IMR-90 (cell line): ENCODE measurements at regions of chr6 and their contacts with region 1.

Region 1: DNA sequence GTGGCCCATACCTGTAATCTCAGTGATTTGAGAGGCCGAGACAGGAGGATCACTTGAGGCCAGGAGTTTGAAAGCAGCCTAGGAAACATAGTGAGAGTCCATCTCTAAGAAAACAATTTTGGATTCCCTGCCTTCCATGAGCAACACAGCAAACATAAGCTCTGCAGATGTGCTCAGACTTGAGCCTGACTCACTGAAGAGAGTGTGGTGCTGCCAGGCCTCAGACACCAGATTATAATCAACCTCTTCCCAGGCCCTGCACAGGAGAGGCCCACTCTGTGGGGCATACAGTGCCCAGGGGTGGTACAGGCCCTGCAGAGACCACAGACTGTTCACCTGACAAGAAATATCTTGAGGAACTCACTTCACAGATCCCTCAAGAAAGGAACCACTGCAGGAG is 19.9 kb downstream of the HLA-DPB1 start:
- DNase-seq: peak; percentile 5
- ATAC-seq: no peak
- H3K4me3 ChIP-seq: no peak overlapping the region
- H3K27ac ChIP-seq: no peak overlapping the region
- H3K4me1 ChIP-seq: no peaks in the 10 kb centered on the region
- H3K27me3 ChIP-seq: peaks cover 16% of the 10 kb centered on the region
- CTCF ChIP-seq: no peak
- POLR2A ChIP-seq: no peak
- RAD21 ChIP-seq: no peak

Region 2: DNA sequence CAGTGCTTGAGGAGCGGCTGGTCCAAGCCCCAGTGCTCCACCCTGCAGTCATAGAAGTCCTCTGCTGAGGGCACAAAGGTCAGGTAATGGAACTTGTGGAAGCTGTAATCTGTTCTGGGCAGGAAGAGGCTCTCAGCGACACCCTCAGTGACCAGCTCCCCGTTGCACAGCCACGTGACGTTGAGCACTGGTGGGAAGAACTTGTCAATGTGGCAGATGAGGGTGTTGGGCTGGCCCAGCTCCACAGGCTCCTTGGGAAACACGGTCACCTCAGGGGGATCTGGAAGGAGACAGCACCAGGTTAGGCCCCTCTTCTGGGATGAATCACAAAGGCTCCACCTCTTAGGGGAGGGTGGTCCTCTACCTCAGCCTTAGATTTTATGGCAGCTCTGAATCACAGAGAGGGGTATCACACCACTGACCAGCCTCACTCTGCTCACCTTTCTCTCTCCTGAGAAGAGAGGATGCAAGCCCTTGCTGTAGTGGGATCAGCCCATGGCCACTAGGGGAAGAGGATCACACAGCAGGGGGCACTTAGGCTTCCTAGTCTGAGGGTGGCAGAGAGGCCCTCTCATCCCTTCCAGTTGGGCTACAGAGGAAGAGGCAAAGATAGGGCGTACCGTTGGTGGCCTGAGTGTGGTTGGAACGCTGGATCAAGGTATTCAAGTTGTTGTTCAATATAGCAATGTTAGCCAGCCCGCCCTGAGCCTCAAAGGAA is 26.5 kb before region 1 on chr6:
- CTCF ChIA-PET with region 1: no interaction called
- POLR2A ChIA-PET with region 1: no interaction called
- dilution Hi-C with region 1: no loop called
- in situ Hi-C with region 1: no loop called
- intact Hi-C with region 1: loop called (anchors 1 kb)
- DNase-seq: no peak
- ATAC-seq: no peak
- H3K4me3 ChIP-seq: no peak overlapping the region
- H3K27ac ChIP-seq: no peak overlapping the region
- H3K4me1 ChIP-seq: no peaks in the 10 kb centered on the region
- H3K27me3 ChIP-seq: peaks cover 17% of the 10 kb centered on the region
- CTCF ChIP-seq: no peak
- POLR2A ChIP-seq: no peak
- RAD21 ChIP-seq: no peak